Sigmoid colon (tissue), 7 donors: ENCODE measurements at regions of chr3 and their contacts with region 1.

Region 1: GRCh38 chr3:36700537-36701248 is 63.7 kb downstream of the DCLK3 start:
- DNase-seq: no peak
- H3K4me3 ChIP-seq: no peak overlapping the region
- H3K27ac ChIP-seq: no peak overlapping the region
- H3K4me1 ChIP-seq: peaks cover 0 to 12% (median 0%) of the 10 kb centered on the region in 4 donors
- H3K27me3 ChIP-seq: no peaks in the 10 kb centered on the region
- CTCF ChIP-seq: peak; percentile 46 to 82 (median 66)
- EP300 ChIP-seq: no peak
- POLR2A ChIP-seq: no peak

Region 2: DNA sequence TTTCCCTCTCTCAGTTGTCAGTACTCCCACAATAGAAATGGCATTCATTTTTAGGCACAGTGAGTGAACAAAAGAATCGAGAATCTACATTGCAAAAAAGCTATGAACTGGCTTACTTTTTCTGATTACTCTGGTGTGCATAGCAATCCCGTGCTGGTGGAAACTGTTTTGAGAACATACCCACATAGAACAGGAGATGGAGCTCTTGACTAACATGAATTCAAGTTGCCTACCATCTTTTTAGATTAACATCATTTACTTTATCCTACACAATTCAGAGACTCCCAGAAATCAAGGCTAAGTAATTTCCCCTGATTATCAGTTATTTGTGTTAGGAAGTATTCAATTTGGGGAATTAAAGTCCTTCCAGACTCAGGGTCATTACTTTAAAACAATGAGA is 734.8 kb before region 1 on chr3:
- intact Hi-C with region 1: loop called (anchors 1 kb)
- DNase-seq: no peak
- H3K4me3 ChIP-seq: no peak overlapping the region
- H3K27ac ChIP-seq: no peak overlapping the region
- H3K4me1 ChIP-seq: peaks cover 0 to 13% (median 5%) of the 10 kb centered on the region in 4 donors
- H3K27me3 ChIP-seq: no peaks in the 10 kb centered on the region
- CTCF ChIP-seq: peak in 3 of 4 experiments; percentile 38 to 57 (median 49)
- EP300 ChIP-seq: no peak
- POLR2A ChIP-seq: no peak

Region 3: GRCh38 chr3:36124118-36124796 is 576.4 kb before region 1 on chr3:
- intact Hi-C with region 1: loop called (anchors 5 kb)
- DNase-seq: no peak
- H3K4me3 ChIP-seq: no peak overlapping the region
- H3K27ac ChIP-seq: no peak overlapping the region
- H3K4me1 ChIP-seq: no peaks in the 10 kb centered on the region
- H3K27me3 ChIP-seq: no peaks in the 10 kb centered on the region
- CTCF ChIP-seq: no peak
- EP300 ChIP-seq: no peak
- POLR2A ChIP-seq: no peak

Region 4: DNA sequence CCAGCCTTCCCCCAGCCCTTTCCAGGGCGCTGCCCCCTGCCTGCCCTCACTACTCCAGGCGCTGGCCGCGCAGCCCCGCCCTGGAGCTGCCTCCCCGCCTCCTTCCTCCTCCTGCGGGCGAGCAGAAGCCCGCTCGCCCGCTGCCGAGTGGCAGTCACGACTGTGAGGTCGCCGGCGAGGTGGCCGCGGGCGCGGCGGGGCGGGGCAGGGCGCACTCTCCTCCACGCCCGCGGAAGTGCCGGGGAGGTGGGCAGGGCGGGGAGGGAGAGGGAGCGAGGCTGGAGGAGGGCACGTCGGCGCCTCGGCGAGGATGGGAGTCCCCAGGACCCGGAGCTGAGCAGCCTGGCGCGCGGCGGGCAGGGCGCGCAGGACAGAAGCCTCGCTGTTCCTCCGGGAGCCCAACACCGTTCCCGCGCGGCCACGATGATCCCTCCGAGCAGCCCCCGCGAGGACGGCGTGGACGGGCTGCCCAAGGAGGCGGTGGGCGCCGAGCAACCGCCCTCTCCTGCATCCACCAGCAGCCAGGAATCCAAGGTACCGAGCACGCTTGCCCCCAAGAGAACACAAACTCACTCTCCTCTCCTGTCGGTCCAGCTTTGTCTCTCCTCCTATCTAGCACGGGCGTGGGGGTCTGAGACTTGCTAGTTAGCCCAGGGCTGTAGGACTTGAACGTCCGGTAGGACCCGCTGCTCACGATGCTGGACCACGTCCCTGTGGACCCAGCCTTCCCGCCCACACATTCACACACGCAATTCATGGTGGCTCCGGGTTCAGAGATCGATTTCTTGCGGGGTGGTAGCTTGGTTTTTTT is 320.3 kb before region 1 on chr3 and contains the start of gene STAC:
- intact Hi-C with region 1: loop called (anchors 5 kb)
- DNase-seq: no peak
- H3K4me3 ChIP-seq: peak within 1 kb of the TSS; percentile 54 to 74 (median 60)
- H3K27ac ChIP-seq: peak within 1 kb of the TSS in 2 of 4 donors; percentile 38 to 68
- H3K4me1 ChIP-seq: peaks cover 0 to 17% (median 7%) of the 10 kb centered on the region in 4 donors
- H3K27me3 ChIP-seq: peaks cover 0 to 12% (median 0%) of the 10 kb centered on the region in 3 donors
- CTCF ChIP-seq: no peak
- EP300 ChIP-seq: no peak
- POLR2A ChIP-seq: no peak
- total RNA-seq, gene STAC: 6.0 to 39.6 (median 25.6) TPM

Region 5: DNA sequence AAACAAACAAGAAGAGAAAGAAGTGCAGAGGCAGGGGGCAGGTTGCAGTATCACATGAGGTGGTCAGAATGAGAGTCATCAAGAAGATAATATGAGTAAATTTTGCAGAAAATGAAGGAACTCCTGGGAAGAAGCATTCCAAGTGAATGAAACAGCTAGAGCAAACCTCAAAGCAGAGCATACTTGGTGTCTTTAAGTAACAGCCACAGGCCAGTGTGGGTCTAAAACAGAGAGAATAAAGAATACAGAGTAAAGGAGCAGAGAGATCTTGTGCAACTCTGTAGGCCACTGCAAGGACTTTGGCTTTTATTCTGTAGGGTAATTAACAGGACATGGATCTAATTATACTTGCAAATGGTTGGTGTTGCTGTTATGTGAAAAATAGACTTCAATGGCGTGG is 239.1 kb before region 1 on chr3:
- intact Hi-C with region 1: no loop called
- DNase-seq: no peak
- H3K4me3 ChIP-seq: no peak overlapping the region
- H3K27ac ChIP-seq: no peak overlapping the region
- H3K4me1 ChIP-seq: peaks cover 0 to 12% (median 8%) of the 10 kb centered on the region in 4 donors
- H3K27me3 ChIP-seq: no peaks in the 10 kb centered on the region
- CTCF ChIP-seq: no peak
- EP300 ChIP-seq: no peak
- POLR2A ChIP-seq: no peak

Region 6: DNA sequence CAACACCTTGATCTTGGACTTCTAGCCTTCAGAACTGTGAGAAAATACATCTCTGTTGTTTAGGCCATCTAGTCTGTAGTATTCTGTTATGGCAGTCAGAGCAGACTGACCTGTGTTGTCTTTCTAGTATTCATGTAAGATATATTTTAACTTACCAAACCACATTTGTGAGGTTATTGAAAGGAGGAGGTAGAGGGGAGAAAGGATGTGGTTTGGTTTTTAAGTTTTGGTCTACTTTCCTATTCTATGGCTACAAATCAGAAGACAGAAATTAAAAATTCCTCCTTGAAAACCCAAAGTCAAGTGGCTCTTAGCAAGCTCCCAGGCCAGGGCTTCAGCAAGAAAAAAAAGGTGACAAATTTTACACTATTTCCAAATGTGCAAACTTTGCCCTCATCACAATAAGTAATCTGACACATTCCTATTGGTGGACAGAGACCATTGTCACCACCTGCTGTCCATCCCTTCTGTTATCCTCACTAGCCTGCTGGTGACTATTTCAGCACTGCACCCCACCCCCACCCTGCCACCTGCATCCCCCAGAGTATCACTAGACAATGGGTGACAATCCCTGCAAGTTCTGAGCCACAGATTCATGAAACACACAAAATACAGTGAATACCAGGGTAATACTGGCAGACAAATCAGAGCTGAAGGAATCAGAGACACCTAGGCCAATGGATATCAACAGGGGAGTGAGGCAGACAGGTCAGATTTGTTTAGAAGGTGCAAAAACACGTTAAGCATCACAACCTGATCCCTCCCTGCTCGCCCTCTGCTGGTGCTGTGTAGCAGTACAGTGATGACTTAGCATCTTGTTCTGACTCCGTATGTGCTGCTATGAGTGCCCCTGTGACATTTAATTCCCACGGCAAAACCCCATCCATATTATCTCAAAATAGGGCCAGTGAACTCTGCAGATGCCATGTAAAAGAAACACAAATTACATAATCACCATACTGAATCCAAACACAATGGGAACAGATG is 142.7 kb after region 1 on chr3:
- intact Hi-C with region 1: no loop called
- DNase-seq: no peak
- H3K4me3 ChIP-seq: no peak overlapping the region
- H3K27ac ChIP-seq: no peak overlapping the region
- H3K4me1 ChIP-seq: no peaks in the 10 kb centered on the region
- H3K27me3 ChIP-seq: no peaks in the 10 kb centered on the region
- CTCF ChIP-seq: no peak
- EP300 ChIP-seq: no peak
- POLR2A ChIP-seq: no peak